ENCODE measurements at regions of chr2 and their contacts with region 1.

Region 1: GRCh38 chr2:13006829-13007717 is 290.3 kb downstream of the TRIB2 start:
- DNase-seq: peak; percentile 72
- H3K4me3 Mint-ChIP-seq: no peak overlapping the region
- H3K27ac Mint-ChIP-seq: no peak overlapping the region
- H3K4me1 Mint-ChIP-seq: peaks cover 2% of the 10 kb centered on the region
- H3K27me3 Mint-ChIP-seq: peaks cover 28% of the 10 kb centered on the region

Region 2: DNA sequence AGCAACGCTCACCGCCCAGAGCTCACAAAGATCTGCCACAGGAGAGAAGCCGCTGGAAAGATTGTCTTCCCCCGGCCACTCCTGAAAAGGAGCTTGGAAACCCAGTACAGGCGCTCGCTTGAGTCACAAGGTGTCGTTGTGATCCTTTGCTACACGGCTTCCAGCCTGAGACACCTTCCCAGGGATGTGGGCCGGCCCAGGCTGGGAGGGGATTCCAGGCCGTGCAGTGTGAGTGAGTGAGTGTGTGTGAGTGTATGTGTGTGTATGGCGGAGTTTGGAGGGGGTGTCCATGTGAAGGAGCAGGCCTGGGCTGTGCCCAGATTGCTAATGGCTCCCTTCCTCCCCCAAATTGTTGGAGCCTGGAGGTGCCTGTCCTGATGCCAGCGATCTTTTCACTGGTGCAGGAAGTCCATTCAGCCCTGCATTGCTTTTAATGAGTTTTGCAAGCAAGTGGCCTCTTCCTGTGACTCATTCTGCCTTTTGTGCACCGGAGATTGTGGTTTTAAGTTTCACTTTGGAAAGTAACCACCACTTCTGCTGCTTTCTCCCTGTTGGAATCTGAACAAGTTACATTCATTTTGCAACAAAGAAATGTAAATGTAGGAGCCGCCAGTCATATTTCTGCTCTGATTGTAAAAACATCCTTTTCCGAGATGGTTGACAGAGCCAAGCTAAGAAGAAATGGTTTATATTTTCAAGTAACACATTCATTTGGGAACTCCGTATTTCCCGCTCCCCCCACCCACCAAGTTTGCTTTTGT is 1176.9 kb before region 1 on chr2:
- CTCF ChIA-PET with region 1: interaction called, 11 read pairs
- DNase-seq: peak; percentile 69
- H3K4me3 Mint-ChIP-seq: peak overlapping the region; percentile 74
- H3K27ac Mint-ChIP-seq: peak overlapping the region; percentile 89
- H3K4me1 Mint-ChIP-seq: peaks cover 63% of the 10 kb centered on the region
- H3K27me3 Mint-ChIP-seq: peaks cover 31% of the 10 kb centered on the region

Region 3: DNA sequence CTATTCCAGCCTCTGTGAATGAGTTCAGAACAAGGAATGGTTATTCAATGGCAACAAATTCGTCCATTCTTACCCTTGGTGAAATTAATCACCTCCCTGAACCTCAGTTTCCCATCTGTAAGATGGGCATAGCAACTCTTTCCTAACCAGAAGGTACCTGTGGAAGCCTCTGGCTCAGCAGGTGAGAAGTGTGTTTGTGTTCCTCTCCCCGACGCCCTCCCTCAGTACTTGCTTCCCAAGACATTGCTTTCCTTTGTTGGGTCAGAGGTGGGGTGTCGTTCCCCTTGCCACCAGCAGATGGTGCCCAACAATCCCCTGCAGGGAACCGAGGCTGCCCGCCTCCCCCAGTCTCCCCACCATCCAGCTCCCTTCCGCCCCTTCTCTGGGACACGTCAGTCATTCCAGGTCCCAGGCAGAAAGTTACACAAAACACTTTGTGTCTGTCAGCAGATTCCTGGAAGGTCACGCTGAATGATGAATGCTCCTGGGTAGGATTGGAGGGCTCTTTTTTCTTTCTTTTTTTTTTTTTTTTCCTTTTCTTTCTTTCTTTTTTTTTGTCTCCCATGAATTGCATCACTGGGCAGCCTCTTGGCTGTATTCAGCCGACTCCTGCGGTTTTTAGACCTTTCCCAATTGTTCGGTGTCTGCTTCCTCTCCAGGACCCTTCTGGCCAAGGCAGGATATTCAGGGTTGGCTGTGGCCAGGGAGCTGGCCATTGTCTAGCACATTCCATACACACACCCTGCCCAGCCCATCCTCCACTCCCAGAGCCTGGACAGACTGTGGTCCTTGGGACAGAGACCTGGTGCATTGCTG is 1143.4 kb before region 1 on chr2:
- CTCF ChIA-PET with region 1: interaction called, 18 read pairs
- DNase-seq: peak; percentile 76
- H3K4me3 Mint-ChIP-seq: no peak overlapping the region
- H3K27ac Mint-ChIP-seq: peak overlapping the region; percentile 53
- H3K4me1 Mint-ChIP-seq: peaks cover 16% of the 10 kb centered on the region
- H3K27me3 Mint-ChIP-seq: peaks cover 28% of the 10 kb centered on the region

Region 4: GRCh38 chr2:12931186-12931844 is 75.8 kb before region 1 on chr2:
- CTCF ChIA-PET with region 1: interaction called, 21 read pairs
- DNase-seq: peak; percentile 20
- H3K4me3 Mint-ChIP-seq: no peak overlapping the region
- H3K27ac Mint-ChIP-seq: no peak overlapping the region
- H3K4me1 Mint-ChIP-seq: peaks cover 13% of the 10 kb centered on the region
- H3K27me3 Mint-ChIP-seq: peaks cover 19% of the 10 kb centered on the region

Region 5: DNA sequence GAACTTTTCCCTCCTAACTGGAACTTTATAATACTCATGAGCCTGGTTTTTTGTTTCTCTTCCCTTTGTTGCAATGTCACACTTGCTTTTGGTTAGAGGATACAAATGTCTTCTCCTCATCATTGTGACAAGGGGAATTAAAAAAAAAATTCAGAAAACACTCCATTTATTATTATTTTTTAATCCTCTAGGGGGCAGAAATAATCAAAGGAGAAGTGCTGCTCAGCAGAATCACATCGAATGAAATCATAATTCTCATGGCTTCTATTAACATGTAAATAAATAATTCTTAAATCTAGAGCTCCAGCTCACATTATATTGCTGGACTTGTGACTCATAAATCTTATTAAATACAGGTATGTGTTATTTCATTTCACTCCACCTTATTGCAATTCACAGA is 16.6 kb before region 1 on chr2:
- CTCF ChIA-PET with region 1: interaction called, 13 read pairs
- DNase-seq: no peak
- H3K4me3 Mint-ChIP-seq: no peak overlapping the region
- H3K27ac Mint-ChIP-seq: no peak overlapping the region
- H3K4me1 Mint-ChIP-seq: peaks cover 11% of the 10 kb centered on the region
- H3K27me3 Mint-ChIP-seq: peaks cover 4% of the 10 kb centered on the region

Region 6: GRCh38 chr2:13143451-13143850 is 136.4 kb after region 1 on chr2:
- CTCF ChIA-PET with region 1: no interaction called
- DNase-seq: no peak
- H3K4me3 Mint-ChIP-seq: no peak overlapping the region
- H3K27ac Mint-ChIP-seq: no peak overlapping the region
- H3K4me1 Mint-ChIP-seq: no peaks in the 10 kb centered on the region
- H3K27me3 Mint-ChIP-seq: no peaks in the 10 kb centered on the region

Region 7: GRCh38 chr2:13255485-13255884 is 248.4 kb after region 1 on chr2:
- CTCF ChIA-PET with region 1: no interaction called
- DNase-seq: no peak
- H3K4me3 Mint-ChIP-seq: no peak overlapping the region
- H3K27ac Mint-ChIP-seq: no peak overlapping the region
- H3K4me1 Mint-ChIP-seq: no peaks in the 10 kb centered on the region
- H3K27me3 Mint-ChIP-seq: no peaks in the 10 kb centered on the region